ENCODE measurements at regions of chr10 and their contacts with region 1.

Region 1: GRCh38 chr10:48656241-48656913 is 28.3 kb upstream of the WDFY4 start:
- DNase-seq: peak; percentile 78
- H3K4me3 ChIP-seq: peak overlapping the region; percentile 64
- H3K27ac ChIP-seq: peak overlapping the region; percentile 11
- H3K27me3 ChIP-seq: peaks cover 3% of the 10 kb centered on the region
- CTCF ChIP-seq: peak; percentile 83

Region 2: DNA sequence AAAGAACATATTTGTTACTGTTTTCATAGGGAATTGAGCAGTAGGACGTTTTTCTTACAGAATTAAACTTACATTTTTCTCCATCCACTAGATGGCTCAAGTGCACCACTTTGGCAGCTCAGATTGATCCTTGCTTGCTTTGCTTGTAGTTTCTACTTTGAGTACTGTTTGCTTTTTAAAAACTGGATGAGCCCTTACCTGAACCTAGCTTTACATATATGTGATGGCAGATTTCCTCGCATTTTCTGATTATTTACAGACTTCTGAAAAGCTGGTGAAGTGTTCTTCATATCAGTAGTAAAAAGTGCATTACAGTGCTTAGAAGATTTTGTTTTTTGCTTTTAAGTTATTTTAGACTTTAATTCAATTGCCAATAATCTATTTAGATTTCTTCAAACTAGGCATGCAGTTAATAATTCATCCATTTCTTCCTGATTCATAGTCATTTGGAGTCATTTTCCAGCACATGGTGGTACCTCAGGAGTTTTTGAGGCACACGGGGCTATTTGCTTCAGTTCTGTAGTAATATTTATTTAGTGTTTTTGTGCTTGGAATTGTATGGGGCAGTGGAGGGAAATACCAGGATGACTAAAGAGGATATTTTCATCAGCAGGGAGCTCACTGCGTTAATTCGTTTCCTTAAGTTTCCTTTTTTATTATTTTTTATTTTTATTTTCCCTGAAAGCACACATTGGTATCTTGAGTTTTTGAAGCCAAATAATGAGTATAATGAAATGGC is 292.6 kb before region 1 on chr10:
- CTCF ChIA-PET with region 1: interaction called, 117 read pairs
- POLR2A ChIA-PET with region 1: interaction called, 4 read pairs
- DNase-seq: peak; percentile 51
- H3K4me3 ChIP-seq: no peak overlapping the region
- H3K27ac ChIP-seq: no peak overlapping the region
- H3K27me3 ChIP-seq: no peaks in the 10 kb centered on the region
- CTCF ChIP-seq: peak; percentile 80

Region 3: GRCh38 chr10:48444266-48444665 is 212.1 kb before region 1 on chr10:
- CTCF ChIA-PET with region 1: interaction called, 19 read pairs
- POLR2A ChIA-PET with region 1: no interaction called
- DNase-seq: no peak
- H3K4me3 ChIP-seq: no peak overlapping the region
- H3K27ac ChIP-seq: no peak overlapping the region
- H3K27me3 ChIP-seq: no peaks in the 10 kb centered on the region
- CTCF ChIP-seq: peak; percentile 39

Region 4: GRCh38 chr10:48541144-48541795 is 115.1 kb before region 1 on chr10:
- CTCF ChIA-PET with region 1: interaction called, 668 read pairs
- POLR2A ChIA-PET with region 1: no interaction called
- DNase-seq: no peak
- H3K4me3 ChIP-seq: no peak overlapping the region
- H3K27ac ChIP-seq: no peak overlapping the region
- H3K27me3 ChIP-seq: no peaks in the 10 kb centered on the region
- CTCF ChIP-seq: no peak

Region 5: GRCh38 chr10:48614481-48615390 is 41.6 kb before region 1 on chr10:
- CTCF ChIA-PET with region 1: interaction called, 104 read pairs
- POLR2A ChIA-PET with region 1: no interaction called
- DNase-seq: no peak
- H3K4me3 ChIP-seq: no peak overlapping the region
- H3K27ac ChIP-seq: no peak overlapping the region
- H3K27me3 ChIP-seq: no peaks in the 10 kb centered on the region
- CTCF ChIP-seq: peak; percentile 45

Region 6: DNA sequence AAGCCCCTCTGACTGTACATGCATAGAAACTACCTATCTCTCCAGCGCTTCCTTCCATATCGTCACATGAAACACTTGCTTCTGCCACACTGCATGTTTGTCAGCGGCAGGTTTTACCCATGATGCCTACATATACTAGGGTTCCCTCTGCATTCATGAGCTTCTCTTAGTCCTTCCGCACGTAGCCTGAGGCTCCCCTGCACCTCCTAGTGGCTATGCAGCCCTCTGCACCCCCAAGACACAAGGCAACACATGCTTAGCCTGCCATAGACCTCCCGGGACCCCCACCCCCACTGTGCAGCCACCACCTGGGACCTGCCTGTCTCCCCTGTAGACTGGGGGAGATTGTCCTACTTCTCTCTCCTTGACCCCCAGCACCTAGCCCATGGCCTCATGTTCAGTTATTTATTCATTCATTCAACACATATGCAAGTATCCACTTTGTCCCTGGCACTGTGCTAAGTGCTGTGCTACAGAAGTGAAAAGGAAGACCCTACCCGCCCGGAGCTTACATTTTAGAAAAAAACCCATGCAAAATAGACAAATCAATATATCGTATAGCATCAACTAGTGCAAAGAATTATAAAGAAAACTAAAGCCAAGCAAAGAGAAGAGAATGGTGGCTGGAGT is 508.3 kb after region 1 on chr10:
- CTCF ChIA-PET with region 1: interaction called, 34 read pairs
- POLR2A ChIA-PET with region 1: no interaction called
- DNase-seq: no peak
- H3K4me3 ChIP-seq: no peak overlapping the region
- H3K27ac ChIP-seq: no peak overlapping the region
- H3K27me3 ChIP-seq: no peaks in the 10 kb centered on the region
- CTCF ChIP-seq: peak; percentile 68

Region 7: GRCh38 chr10:49524496-49524895 is 868.1 kb after region 1 on chr10:
- CTCF ChIA-PET with region 1: interaction called, 62 read pairs
- POLR2A ChIA-PET with region 1: interaction called, 4 read pairs
- DNase-seq: no peak
- H3K4me3 ChIP-seq: no peak overlapping the region
- H3K27ac ChIP-seq: no peak overlapping the region
- H3K27me3 ChIP-seq: no peaks in the 10 kb centered on the region
- CTCF ChIP-seq: no peak